A549 (cell line): ENCODE measurements at regions of chr20 and their contacts with region 1.

Region 1: DNA sequence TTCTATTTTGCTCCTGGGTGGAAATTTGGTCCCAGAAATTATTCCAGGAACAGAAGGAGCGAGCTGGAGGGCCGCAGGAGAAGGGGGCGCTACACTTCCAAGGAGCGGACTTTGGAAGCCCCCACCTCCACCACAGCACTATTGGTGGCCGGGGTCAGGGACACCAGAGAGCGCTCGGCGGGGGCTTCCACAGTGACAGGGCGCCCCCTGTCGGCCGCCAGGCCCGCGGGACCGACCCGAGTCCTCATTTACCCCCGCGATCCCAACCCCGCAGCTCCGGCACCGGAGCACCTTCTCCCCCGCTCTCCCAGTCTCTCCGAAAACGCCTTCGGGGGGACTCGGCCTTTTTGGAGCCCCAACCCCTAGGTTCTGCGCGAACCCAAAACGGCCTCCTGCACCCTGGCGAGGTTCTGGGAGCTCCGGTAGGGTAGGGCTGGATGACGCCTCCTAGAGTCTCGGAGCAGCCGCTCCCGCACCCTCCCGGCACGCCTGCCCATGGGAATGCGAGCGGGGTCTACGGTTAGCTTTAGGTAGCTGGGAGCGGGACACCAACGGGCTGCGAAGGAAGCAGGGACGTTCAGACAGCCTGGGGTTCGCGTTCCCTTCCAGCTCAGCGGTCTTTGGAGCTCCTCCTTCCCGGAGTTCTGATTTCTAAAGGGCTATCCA is 2.4 kb upstream of the FOXA2 start:
- DNase-seq: peak; percentile 71 to 83
- ATAC-seq: peak; percentile 35 to 63
- H3K4me3 ChIP-seq: peak overlapping the region; percentile 54
- H3K27ac ChIP-seq: peak overlapping the region; percentile 94 to 96
- H3K4me1 ChIP-seq: peaks cover 24% of the 10 kb centered on the region
- CTCF ChIP-seq: peak; percentile 98
- EP300 ChIP-seq: no peak
- POLR2A ChIP-seq: no peak
- RAD21 ChIP-seq: peak; percentile 94 to 100

Region 2: GRCh38 chr20:22333885-22334545 is 252.8 kb before region 1 on chr20:
- CTCF ChIA-PET with region 1: interaction called, 276 read pairs
- POLR2A ChIA-PET with region 1: no interaction called
- DNase-seq: peak; percentile 81 to 96
- ATAC-seq: peak; percentile 83 to 93
- H3K4me3 ChIP-seq: no peak overlapping the region
- H3K27ac ChIP-seq: no peak overlapping the region
- H3K4me1 ChIP-seq: no peaks in the 10 kb centered on the region
- CTCF ChIP-seq: peak; percentile 94
- EP300 ChIP-seq: no peak
- POLR2A ChIP-seq: no peak
- RAD21 ChIP-seq: peak; percentile 95 to 96

Region 3: DNA sequence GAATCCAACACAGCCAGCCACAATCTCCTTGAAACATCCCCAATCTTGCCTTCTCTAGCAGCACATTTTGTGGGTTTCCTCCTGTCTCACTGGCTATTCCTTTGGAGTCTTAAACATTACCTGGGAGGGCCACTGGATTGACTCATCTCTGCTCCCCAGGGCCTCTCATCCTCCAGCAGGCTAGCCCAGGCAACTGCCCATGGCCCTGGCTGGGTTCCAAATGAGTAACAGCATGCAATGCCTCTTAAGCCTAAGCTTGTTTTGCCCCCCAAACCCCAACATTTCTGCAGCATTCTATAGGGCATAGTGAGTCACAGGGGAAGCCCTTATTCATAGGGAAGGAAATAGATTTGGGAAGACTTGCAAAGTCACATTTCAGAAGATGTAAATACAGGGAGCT is 207.3 kb before region 1 on chr20:
- CTCF ChIA-PET with region 1: interaction called, 134 read pairs
- POLR2A ChIA-PET with region 1: interaction called, 10 read pairs
- DNase-seq: peak in 1 of 2 experiments; percentile 71
- ATAC-seq: peak; percentile 49 to 70; a peak in 5 of 6 replicates
- H3K4me3 ChIP-seq: no peak overlapping the region
- H3K27ac ChIP-seq: peak overlapping the region; percentile 63 to 72
- H3K4me1 ChIP-seq: peaks cover 61% of the 10 kb centered on the region
- CTCF ChIP-seq: no peak
- EP300 ChIP-seq: no peak; a peak in 1 of 5 replicates
- POLR2A ChIP-seq: no peak
- RAD21 ChIP-seq: peak in 1 of 2 experiments; percentile 19; a peak in 1 of 5 replicates

Region 4: DNA sequence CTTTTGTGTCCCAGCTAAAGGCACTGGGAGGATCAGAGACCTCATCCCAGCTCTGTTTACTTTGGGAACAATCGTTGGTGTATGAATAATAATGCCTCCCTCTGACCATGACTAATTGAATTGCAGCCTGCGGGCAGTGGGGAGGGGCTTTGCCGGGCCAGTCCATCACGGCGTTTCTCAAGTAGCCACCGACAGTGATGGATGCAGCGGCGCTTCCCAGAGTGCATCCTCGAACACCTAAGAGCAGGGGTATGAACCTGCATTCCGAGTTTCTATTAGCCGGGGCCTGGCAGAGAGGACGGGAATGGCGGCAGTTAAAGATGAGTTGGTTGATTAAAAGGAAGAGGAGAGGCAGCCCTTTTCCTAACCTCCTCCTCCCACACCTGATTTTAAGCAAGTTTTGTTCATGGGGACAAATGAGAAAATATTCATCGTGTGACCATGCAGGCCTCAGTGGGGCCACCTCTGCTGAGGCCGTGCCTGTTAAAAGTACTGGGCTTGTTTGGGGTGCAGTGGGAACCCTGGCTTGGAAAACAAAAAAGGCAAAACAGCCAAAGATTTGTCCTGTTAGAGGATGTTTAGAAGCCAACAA is 156.5 kb before region 1 on chr20:
- CTCF ChIA-PET with region 1: interaction called, 11 read pairs
- POLR2A ChIA-PET with region 1: interaction called, 3 read pairs
- DNase-seq: peak; percentile 88 to 92
- ATAC-seq: peak; percentile 88 to 90
- H3K4me3 ChIP-seq: peak overlapping the region; percentile 9; the same call in 2 of the 3 replicates
- H3K27ac ChIP-seq: peak overlapping the region; percentile 83 to 90
- H3K4me1 ChIP-seq: peaks cover 54% of the 10 kb centered on the region
- CTCF ChIP-seq: no peak; the same call in 2 of the 3 replicates
- EP300 ChIP-seq: peak in 1 of 2 experiments; percentile 58; a peak in 1 of 5 replicates
- POLR2A ChIP-seq: 0 out of 2 replicates have a peak, but pooled peaks have one; percentile 10
- RAD21 ChIP-seq: peak; percentile 28 to 48; a peak in 3 of 5 replicates

Region 5: GRCh38 chr20:22511943-22512910 is 74.6 kb before region 1 on chr20:
- CTCF ChIA-PET with region 1: interaction called, 13 read pairs
- POLR2A ChIA-PET with region 1: interaction called, 3 read pairs
- DNase-seq: peak in 1 of 2 experiments; percentile 42
- ATAC-seq: peak; percentile 80 to 87
- H3K4me3 ChIP-seq: no peak overlapping the region
- H3K27ac ChIP-seq: peak overlapping the region in 1 of 2 experiments; percentile 69; a peak in 4 of 6 replicates
- H3K4me1 ChIP-seq: peaks cover 18% of the 10 kb centered on the region
- CTCF ChIP-seq: no peak
- EP300 ChIP-seq: no peak
- POLR2A ChIP-seq: no peak
- RAD21 ChIP-seq: no peak

Region 6: GRCh38 chr20:22617160-22617559 is 30.4 kb after region 1 on chr20:
- CTCF ChIA-PET with region 1: interaction called, 29 read pairs
- POLR2A ChIA-PET with region 1: no interaction called
- DNase-seq: peak; percentile 80 to 84
- ATAC-seq: peak; percentile 95 to 99
- H3K4me3 ChIP-seq: no peak overlapping the region
- H3K27ac ChIP-seq: peak overlapping the region in 1 of 2 experiments; percentile 27; a peak in 3 of 6 replicates
- H3K4me1 ChIP-seq: peaks cover 25% of the 10 kb centered on the region
- CTCF ChIP-seq: no peak
- EP300 ChIP-seq: no peak
- POLR2A ChIP-seq: no peak; the same call in 1 of the 2 replicates
- RAD21 ChIP-seq: no peak

Region 7: GRCh38 chr20:23340524-23340923 is 753.7 kb after region 1 on chr20:
- CTCF ChIA-PET with region 1: interaction called, 17 read pairs
- POLR2A ChIA-PET with region 1: no interaction called
- DNase-seq: peak; percentile 83 to 87
- ATAC-seq: peak; percentile 85 to 95
- H3K4me3 ChIP-seq: no peak overlapping the region
- H3K27ac ChIP-seq: peak overlapping the region; percentile 6 to 60; a peak in 5 of 6 replicates
- H3K4me1 ChIP-seq: no peaks in the 10 kb centered on the region
- CTCF ChIP-seq: peak; percentile 90
- EP300 ChIP-seq: no peak
- POLR2A ChIP-seq: no peak
- RAD21 ChIP-seq: peak; percentile 92 to 96

Region 8: DNA sequence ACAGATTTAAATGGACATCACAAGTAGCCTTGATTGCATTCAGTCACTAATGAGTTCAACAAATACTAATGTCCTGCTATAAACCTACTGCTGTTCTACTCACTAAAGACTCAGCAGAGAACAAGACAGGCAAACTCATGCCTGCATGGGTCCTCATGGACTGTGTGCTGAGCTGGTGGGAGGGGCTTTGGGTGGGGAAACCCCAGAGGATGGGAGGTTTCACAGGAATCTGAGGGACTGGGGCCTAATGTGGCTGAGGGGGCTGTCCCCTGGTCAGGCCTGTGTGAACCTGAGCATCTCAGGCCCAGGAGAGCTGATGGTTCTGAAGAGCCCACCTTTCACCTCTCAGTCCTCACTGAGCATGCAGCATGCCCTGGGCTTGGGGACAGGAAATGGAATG is 905.5 kb after region 1 on chr20:
- CTCF ChIA-PET with region 1: no interaction called
- POLR2A ChIA-PET with region 1: no interaction called
- DNase-seq: no peak
- ATAC-seq: peak in 1 of 2 experiments; percentile 30; a peak in 2 of 6 replicates
- H3K4me3 ChIP-seq: no peak overlapping the region
- H3K27ac ChIP-seq: no peak overlapping the region
- H3K4me1 ChIP-seq: no peaks in the 10 kb centered on the region
- CTCF ChIP-seq: no peak
- EP300 ChIP-seq: no peak
- POLR2A ChIP-seq: no peak
- RAD21 ChIP-seq: no peak